ENCODE measurements at regions of chr1 and their contacts with region 1.

Region 1: DNA sequence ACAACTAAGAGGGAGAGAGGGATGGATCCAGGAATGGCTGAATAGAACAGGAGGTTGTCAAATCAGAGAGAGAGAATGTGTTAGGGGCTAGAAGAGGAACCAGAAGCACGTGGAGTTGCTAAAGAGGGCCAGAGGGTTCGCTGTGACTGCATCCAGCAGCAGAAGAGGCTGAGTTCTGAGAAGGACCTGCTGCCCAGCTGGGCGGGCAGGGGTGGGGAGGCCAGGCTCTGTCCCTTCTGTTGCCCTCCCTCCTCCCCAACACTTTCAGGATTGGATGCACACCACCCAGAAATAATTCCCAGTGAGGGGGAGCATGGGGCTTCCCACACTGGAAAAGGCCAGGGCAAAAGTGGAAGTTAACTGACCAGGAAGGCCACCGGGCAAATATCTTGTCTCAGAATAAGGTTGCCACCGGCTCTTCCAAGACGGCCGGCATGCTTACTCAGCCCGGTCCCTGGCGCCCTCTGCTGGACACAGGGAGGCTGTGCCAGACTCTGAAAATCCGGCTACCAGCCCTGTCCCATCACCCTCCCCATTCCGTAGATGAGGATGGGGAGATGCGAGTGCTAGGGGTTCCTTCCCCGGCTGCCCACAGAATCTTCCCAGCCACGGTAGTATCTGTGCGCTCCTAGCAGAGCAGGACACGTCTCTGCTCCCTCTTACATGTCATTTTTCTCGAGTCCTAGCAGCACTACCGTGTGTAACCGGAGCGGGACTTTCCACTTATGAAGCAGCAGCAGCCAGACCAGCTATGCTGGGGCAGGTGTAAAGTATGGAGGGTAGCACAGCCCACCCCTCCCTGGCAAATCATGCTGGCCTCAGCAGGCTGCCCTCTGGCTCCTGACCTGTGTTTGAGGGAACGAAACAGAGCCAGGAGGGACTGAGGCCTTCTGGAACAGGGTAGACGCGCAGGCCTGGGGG is 46.8 kb upstream of the A3GALT2 start:
- DNase-seq: peak; percentile 96

Region 2: GRCh38 chr1:33219881-33220661 is 147.7 kb before region 1 on chr1:
- intact Hi-C with region 1: loop called (anchors 1 kb)
- DNase-seq: no peak

Region 3: GRCh38 chr1:33334081-33334552 is 33.6 kb before region 1 on chr1:
- intact Hi-C with region 1: loop called (anchors 5 kb)
- DNase-seq: no peak

Region 4: GRCh38 chr1:33472349-33472980 is 104.7 kb after region 1 on chr1 and contains the start of gene ZSCAN20:
- intact Hi-C with region 1: loop called (anchors 2 kb)
- DNase-seq: peak; percentile 98
- total RNA-seq, gene ZSCAN20: 8.3 TPM

Region 5: GRCh38 chr1:33588726-33589125 is 221.0 kb after region 1 on chr1:
- intact Hi-C with region 1: no loop called
- DNase-seq: no peak

Measured in cardiac septum (tissue), 1 donor.